Testis (tissue), 5 donors: ENCODE measurements at regions of chr5 and their contacts with region 1.

Region 1: DNA sequence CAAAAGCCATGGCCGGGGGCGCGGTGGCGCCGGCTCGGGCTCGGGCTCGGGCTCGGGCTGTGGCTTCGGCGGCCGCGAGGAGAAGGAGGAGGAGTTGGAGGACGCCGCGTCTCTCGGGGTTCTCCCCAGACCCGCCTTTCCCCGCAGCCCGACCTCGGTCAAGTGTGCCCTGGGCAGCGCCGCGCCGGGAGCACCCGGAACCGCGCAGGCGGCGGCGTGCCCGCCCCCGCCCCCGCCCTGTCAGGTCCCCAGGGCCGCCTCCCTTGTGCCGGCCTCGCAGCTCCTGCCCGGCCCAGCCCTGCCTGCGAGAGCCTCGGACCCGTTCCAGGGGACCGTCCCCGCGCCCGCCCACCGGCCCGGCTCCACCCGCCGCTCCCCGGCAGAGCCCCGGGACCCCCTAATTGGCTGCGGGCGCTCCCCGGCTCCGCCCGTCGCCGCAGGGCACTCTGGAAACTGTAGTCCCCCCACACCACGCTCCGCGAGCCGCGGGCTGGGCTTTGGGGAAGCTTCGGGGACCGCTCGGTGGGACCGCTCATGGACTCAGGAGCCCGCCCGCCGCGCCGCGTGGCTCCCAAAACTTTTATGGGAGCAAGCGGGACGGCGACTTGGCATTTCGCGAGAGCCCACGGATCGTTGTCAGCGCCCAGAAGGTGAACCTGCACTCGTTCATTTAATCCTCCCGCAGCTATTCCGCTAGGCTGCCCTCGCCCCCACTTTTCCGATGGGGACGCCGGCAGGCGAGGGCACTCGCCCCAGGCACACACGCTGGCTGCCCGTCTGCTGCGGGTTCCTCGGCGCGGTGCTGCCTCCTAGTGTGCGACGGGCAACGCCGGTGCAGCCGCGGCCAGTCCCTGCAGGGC is at the start of gene STK10:
- DNase-seq: peak; percentile 91
- H3K4me3 ChIP-seq: peak within 1 kb of the TSS; percentile 87 to 90
- H3K27ac ChIP-seq: peak within 1 kb of the TSS; percentile 79 to 91
- H3K4me1 ChIP-seq: peaks cover 18% of the 10 kb centered on the region
- H3K27me3 ChIP-seq: no peaks in the 10 kb centered on the region
- CTCF ChIP-seq: peak; percentile 72 to 87 (median 78)
- POLR2A ChIP-seq: no peak
- total RNA-seq, gene STK10: 142 to 148 TPM

Region 2: GRCh38 chr5:172035039-172035438 is 153.2 kb before region 1 on chr5:
- intact Hi-C with region 1: no loop called
- DNase-seq: no peak
- H3K4me3 ChIP-seq: no peak overlapping the region
- H3K27ac ChIP-seq: no peak overlapping the region
- H3K4me1 ChIP-seq: no peaks in the 10 kb centered on the region
- H3K27me3 ChIP-seq: no peaks in the 10 kb centered on the region
- CTCF ChIP-seq: no peak
- POLR2A ChIP-seq: no peak

Region 3: GRCh38 chr5:172106511-172107356 is 81.5 kb before region 1 on chr5:
- intact Hi-C with region 1: loop called (anchors 5 kb)
- DNase-seq: peak; percentile 78
- H3K4me3 ChIP-seq: peak overlapping the region; percentile 25 to 32
- H3K27ac ChIP-seq: no peak overlapping the region
- H3K4me1 ChIP-seq: peaks cover 54% of the 10 kb centered on the region
- H3K27me3 ChIP-seq: no peaks in the 10 kb centered on the region
- CTCF ChIP-seq: peak; percentile 86 to 99 (median 90)
- POLR2A ChIP-seq: no peak

Region 4: GRCh38 chr5:172266676-172267092 is 78.4 kb after region 1 on chr5:
- intact Hi-C with region 1: no loop called
- DNase-seq: no peak
- H3K4me3 ChIP-seq: no peak overlapping the region
- H3K27ac ChIP-seq: no peak overlapping the region
- H3K4me1 ChIP-seq: no peaks in the 10 kb centered on the region
- H3K27me3 ChIP-seq: no peaks in the 10 kb centered on the region
- CTCF ChIP-seq: no peak
- POLR2A ChIP-seq: no peak